ENCODE measurements at regions of chr18 and their contacts with region 1.

Region 1: GRCh38 chr18:5982332-5982731 is 87.0 kb upstream of the TMEM200C start:
- DNase-seq: no peak
- ATAC-seq: no peak
- H3K4me3 ChIP-seq: no peak overlapping the region
- H3K27ac ChIP-seq: no peak overlapping the region
- H3K4me1 ChIP-seq: peaks cover 0 to 7% (median 0%) of the 10 kb centered on the region in 9 donors
- H3K27me3 ChIP-seq: peaks cover 0 to 2% (median 0%) of the 10 kb centered on the region in 7 donors
- CTCF ChIP-seq: no peak

Region 2: DNA sequence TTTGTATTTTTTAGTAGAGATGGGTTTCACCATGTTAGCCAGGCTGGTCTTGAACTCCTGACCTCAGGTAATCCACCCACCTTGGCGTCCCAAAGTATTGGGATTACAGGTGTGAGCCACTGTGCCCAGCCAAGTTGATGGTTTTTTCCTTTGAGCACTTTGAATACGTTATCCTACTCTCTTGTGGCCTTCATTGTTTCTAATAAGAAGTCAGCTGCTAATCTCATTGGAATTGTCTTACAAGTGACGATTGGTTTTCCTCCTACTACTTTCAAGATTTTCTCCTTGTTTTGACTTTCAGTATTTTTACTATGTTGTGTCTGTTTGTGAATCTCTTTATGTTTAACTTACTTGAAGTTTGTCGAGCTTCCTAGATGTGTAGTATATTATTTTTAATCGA is 175.5 kb before region 1 on chr18:
- intact Hi-C with region 1: no loop called
- DNase-seq: no peak
- ATAC-seq: no peak
- H3K4me3 ChIP-seq: no peak overlapping the region
- H3K27ac ChIP-seq: no peak overlapping the region
- H3K4me1 ChIP-seq: no peaks in the 10 kb centered on the region
- H3K27me3 ChIP-seq: peaks cover 0 to 8% (median 0%) of the 10 kb centered on the region in 7 donors
- CTCF ChIP-seq: no peak

Region 3: DNA sequence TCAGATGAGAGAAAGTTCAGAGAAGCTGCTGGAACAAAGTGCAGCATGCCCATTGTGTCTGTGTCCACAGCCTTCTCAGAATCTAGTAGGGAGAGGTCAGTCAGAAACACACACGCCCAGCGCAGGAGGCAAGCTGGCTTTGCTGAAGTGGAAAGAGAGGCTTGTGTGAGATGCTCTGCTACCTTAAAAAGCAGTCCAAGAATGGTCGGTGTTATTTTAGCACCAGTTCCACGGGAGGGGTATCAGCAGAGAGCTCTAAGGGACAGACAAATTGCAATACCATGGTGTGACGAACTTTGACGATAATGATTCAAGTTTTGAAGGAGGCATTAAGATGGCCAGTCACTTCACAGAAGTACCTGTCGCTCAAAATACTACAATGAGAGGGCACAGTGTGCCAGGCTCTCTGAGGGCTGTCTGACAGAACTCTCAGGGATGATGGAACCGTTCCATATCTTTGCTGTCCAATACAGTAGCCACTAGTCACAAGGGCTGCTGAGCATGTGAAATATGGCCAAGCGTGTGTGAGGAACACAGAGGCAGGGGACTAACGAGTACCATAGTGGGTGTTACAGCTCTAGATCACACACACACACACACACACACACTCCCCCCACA is 150.5 kb after region 1 on chr18:
- intact Hi-C with region 1: loop called in 2 of 10 experiments (anchors 2 to 10 kb)
- DNase-seq: peak; percentile 22 to 50
- ATAC-seq: peak in 7 of 8 donors; percentile 79 to 99 (median 96)
- H3K4me3 ChIP-seq: no peak overlapping the region
- H3K27ac ChIP-seq: peak overlapping the region in 2 of 10 donors; percentile 6 to 51
- H3K4me1 ChIP-seq: peaks cover 0 to 20% (median 5%) of the 10 kb centered on the region in 9 donors
- H3K27me3 ChIP-seq: no peaks in the 10 kb centered on the region
- CTCF ChIP-seq: no peak

Measured in heart right ventricle (tissue), 16 donors.